Thyroid gland (tissue), 4 donors: ENCODE measurements at regions of chr13 and their contacts with region 1.

Region 1: DNA sequence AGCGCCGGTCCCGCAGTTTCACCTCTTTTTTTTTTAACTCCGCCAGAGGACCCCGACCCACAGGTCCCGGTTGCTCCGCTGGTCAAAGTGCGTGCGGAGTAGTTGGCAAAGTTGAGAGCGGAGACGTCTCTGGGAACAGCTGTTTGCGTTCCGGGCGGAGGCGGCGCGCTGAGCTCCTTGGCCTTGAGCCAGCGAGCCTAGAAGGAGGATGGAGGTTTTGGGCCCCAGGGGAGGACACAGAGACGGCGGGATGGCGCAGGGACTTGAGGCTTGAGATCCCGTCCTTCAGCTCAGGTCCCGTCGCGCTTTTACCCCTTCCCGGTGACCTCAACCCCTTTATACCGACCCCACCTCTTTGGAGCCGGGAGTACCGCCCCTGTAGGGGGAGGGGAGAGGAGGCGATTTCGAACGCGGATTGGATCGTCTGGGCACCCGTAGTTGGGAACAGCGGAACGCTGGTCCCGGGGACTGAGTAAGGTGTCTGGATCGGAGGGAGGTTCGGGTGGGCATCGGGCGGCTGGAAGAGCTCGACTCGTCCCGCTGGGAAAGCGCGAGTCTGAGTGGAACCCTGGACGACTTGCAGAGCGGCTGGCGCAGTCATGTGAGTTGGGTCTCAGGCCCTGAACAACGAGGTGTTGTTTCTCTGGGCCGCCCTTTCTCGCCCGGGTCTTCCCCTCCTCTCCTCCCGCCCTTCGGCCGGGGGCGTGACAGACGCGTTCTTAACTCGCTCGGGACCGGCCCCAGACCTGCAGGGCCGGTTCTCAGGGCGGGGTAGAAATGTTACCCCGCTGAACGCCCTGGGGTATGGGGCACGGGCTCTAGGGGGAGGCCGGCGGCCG is at the start of gene WBP4:
- DNase-seq: peak; percentile 95 to 96
- H3K4me3 ChIP-seq: peak within 1 kb of the TSS; percentile 64 to 76 (median 66)
- H3K27ac ChIP-seq: peak within 1 kb of the TSS; percentile 99
- H3K4me1 ChIP-seq: peaks cover 26 to 49% of the 10 kb centered on the region in 2 donors
- H3K27me3 ChIP-seq: no peaks in the 10 kb centered on the region
- CTCF ChIP-seq: peak in 2 of 6 experiments; percentile 24 to 28
- POLR2A ChIP-seq: peak; percentile 50 to 81
- total RNA-seq, gene WBP4: 9.4 to 19.2 (median 10.6) TPM

Region 2: DNA sequence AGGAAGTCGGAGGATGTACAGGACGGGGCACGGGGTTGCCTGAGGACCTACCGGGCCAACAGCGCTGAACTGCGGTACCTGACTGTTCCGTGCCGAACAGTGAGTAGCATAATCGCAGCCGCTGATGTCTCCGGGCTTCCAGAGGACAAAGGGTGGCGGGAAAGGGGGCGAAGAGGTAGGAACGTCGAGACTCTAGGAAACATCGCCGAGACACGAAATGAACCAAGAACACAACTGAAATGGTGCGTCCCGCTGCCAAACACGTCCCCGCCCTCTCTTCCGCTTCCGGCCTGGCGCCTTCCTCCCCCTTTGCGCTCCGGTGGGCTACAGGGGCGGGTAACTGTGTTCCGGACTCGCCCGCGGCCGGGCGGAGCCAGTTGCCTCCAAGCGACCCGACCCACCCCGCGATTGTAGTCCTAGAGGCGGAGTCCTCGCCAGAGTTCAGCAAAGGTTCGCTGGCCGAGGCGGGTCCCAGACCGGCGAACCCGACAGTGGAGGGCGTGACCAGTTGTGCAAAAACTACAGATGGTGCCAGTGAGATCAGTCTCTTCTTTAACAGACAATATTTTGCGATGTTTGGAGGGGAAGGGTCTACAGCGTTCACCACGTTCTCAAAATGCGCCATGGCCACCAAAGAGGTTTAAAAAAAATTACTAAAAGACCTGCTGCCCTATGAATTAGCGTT is 290.2 kb before region 1 on chr13 and contains the start of gene MRPS31:
- intact Hi-C with region 1: loop called (anchors 10 kb)
- DNase-seq: peak; percentile 97 to 98
- H3K4me3 ChIP-seq: peak within 1 kb of the TSS; percentile 30 to 64 (median 56)
- H3K27ac ChIP-seq: peak within 1 kb of the TSS; percentile 70 to 78 (median 77)
- H3K4me1 ChIP-seq: peaks cover 0 to 14% of the 10 kb centered on the region in 2 donors
- H3K27me3 ChIP-seq: no peaks in the 10 kb centered on the region
- CTCF ChIP-seq: peak in 1 of 6 experiments; percentile 2
- POLR2A ChIP-seq: peak; percentile 44 to 81
- total RNA-seq, gene MRPS31: 26.9 to 34.9 (median 32.3) TPM

Region 3: GRCh38 chr13:41019011-41019487 is 42.2 kb before region 1 on chr13 and contains the start of gene ELF1:
- intact Hi-C with region 1: no loop called
- DNase-seq: peak; percentile 66 to 70
- H3K4me3 ChIP-seq: peak within 1 kb of the TSS in 2 of 3 donors; percentile 14 to 25
- H3K27ac ChIP-seq: peak within 1 kb of the TSS; percentile 81 to 94 (median 85)
- H3K4me1 ChIP-seq: peaks cover 36 to 37% of the 10 kb centered on the region in 2 donors
- H3K27me3 ChIP-seq: no peaks in the 10 kb centered on the region
- CTCF ChIP-seq: no peak
- POLR2A ChIP-seq: peak in 1 of 2 donors; percentile 50
- total RNA-seq, gene ELF1: 105 to 119 (median 110) TPM